ENCODE measurements at regions of chr6 and their contacts with region 1.

Region 1: GRCh38 chr6:11232193-11232769 is at the start of gene NEDD9:
- DNase-seq: peak; percentile 79
- ATAC-seq: peak; percentile 99
- H3K4me3 Mint-ChIP-seq: peak within 1 kb of the TSS; percentile 95
- H3K27ac Mint-ChIP-seq: peak within 1 kb of the TSS; percentile 94
- H3K4me1 Mint-ChIP-seq: peaks cover 51% of the 10 kb centered on the region
- H3K27me3 Mint-ChIP-seq: no peaks in the 10 kb centered on the region
- CTCF ChIP-seq: no peak
- total RNA-seq, gene NEDD9: 57.4 and 61.9 TPM in 2 replicates

Region 2: DNA sequence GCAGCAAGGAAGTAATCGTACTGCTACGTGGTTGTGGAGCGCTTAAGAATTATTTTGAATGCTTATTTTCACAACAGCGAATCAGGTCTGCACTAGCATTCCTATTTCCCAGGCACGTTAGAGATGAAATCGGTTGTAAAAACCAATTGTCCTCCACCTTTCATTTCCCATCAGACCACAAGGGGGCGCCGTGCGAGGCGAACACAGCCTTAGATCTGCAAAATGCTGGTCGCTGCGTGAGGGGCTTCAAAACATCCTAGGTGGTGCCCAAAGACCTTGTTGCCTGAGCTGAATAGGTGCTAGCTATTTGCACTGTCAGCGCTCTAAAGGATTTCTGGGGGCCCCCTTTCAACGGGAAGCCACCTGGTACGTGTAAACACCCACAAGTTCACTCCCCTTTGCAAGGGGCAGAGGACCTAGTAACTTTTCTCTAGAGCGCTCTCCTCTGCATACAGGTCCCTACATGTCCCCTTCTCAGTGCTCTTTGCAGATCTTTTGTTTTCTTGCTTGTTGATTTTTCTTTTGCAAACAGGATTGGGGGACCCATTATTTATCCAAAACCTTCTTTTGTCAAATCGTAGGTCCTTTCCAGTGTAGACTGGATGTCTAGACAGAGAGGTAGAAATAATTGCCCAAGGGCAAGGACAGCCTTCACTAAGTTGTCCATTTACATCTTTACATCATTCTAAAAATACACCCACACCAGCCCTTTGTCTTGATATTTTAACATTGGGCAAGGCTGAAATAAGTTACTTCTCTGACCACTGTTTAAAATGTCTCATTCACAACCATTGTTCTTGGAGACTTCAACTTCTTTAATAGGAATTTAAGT is 59.6 kb before region 1 on chr6:
- CTCF ChIA-PET with region 1: no interaction called
- POLR2A ChIA-PET with region 1: no interaction called
- intact Hi-C with region 1: loop called (anchors 2 kb)
- DNase-seq: peak; percentile 68
- ATAC-seq: peak; percentile 77
- H3K4me3 Mint-ChIP-seq: peak overlapping the region; percentile 42
- H3K27ac Mint-ChIP-seq: no peak overlapping the region
- H3K4me1 Mint-ChIP-seq: peaks cover 9% of the 10 kb centered on the region
- H3K27me3 Mint-ChIP-seq: no peaks in the 10 kb centered on the region
- CTCF ChIP-seq: peak; percentile 89

Region 3: DNA sequence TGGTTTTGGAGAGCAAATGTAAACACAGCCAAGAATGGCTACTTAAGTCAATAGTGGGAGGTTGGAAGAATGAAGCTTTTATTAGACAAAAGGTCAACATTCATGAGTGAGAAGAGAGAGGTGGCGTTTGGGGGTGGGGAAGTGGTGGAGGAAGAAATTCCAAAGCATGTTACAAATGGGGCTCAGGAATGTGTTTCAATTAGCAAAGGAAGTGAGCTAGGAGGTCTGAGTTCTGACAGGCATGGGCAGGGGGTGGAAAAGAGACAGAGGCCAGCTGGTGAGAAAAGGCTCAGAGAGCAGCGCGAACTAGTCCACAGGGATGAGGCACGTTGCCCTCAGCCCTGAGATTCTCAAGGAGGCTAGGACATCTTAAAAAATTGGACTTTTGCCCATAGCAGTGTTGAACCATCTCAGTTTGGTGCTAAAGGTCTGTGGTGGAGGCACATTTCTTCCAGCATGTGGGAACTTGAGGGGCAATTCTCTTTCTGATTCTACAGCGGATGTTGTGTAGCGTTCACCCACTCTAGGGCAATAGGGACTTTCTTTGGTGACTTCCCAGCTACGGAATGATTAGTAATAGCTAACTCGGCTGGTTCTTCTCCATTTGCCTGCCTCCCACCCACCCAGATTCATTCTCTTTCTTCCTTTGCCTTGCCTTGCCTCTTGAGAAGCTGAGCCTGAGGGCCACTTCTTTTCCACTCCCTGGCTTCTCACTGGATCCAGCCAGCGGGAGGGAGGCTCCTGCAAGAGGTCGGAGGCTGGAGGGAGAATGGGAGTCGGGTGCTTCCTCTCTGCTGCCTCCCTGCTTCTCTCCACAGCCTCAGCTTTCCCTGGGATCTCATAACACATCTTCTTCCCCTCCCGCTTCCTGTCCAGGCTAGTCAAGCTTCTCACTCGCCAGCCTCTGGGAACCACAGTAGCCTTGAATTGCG is 45.3 kb after region 1 on chr6:
- CTCF ChIA-PET with region 1: no interaction called
- POLR2A ChIA-PET with region 1: interaction called, 5 read pairs
- intact Hi-C with region 1: loop called (anchors 1 kb)
- DNase-seq: no peak
- ATAC-seq: peak; percentile 69
- H3K4me3 Mint-ChIP-seq: peak overlapping the region; percentile 59
- H3K27ac Mint-ChIP-seq: peak overlapping the region; percentile 91
- H3K4me1 Mint-ChIP-seq: peaks cover 48% of the 10 kb centered on the region
- H3K27me3 Mint-ChIP-seq: no peaks in the 10 kb centered on the region
- CTCF ChIP-seq: no peak

Region 4: GRCh38 chr6:11374036-11375010 is 142.0 kb after region 1 on chr6:
- CTCF ChIA-PET with region 1: no interaction called
- POLR2A ChIA-PET with region 1: interaction called, 3 read pairs
- intact Hi-C with region 1: loop called (anchors 2 kb)
- DNase-seq: no peak
- ATAC-seq: peak; percentile 93
- H3K4me3 Mint-ChIP-seq: peak overlapping the region; percentile 53
- H3K27ac Mint-ChIP-seq: peak overlapping the region; percentile 77
- H3K4me1 Mint-ChIP-seq: peaks cover 90% of the 10 kb centered on the region
- H3K27me3 Mint-ChIP-seq: no peaks in the 10 kb centered on the region
- CTCF ChIP-seq: no peak

Region 5: GRCh38 chr6:11537229-11538051 is 305.2 kb after region 1 on chr6 and contains the start of gene TMEM170B:
- CTCF ChIA-PET with region 1: no interaction called
- POLR2A ChIA-PET with region 1: no interaction called
- intact Hi-C with region 1: loop called (anchors 1 kb)
- DNase-seq: peak; percentile 99
- ATAC-seq: peak; percentile 94
- H3K4me3 Mint-ChIP-seq: peak within 1 kb of the TSS; percentile 84
- H3K27ac Mint-ChIP-seq: peak within 1 kb of the TSS; percentile 74
- H3K4me1 Mint-ChIP-seq: peaks cover 11% of the 10 kb centered on the region
- H3K27me3 Mint-ChIP-seq: no peaks in the 10 kb centered on the region
- CTCF ChIP-seq: no peak
- total RNA-seq, gene TMEM170B: 2.6 and 2.8 TPM in 2 replicates